ENCODE measurements at regions of chr11 and their contacts with region 1.

Region 1: DNA sequence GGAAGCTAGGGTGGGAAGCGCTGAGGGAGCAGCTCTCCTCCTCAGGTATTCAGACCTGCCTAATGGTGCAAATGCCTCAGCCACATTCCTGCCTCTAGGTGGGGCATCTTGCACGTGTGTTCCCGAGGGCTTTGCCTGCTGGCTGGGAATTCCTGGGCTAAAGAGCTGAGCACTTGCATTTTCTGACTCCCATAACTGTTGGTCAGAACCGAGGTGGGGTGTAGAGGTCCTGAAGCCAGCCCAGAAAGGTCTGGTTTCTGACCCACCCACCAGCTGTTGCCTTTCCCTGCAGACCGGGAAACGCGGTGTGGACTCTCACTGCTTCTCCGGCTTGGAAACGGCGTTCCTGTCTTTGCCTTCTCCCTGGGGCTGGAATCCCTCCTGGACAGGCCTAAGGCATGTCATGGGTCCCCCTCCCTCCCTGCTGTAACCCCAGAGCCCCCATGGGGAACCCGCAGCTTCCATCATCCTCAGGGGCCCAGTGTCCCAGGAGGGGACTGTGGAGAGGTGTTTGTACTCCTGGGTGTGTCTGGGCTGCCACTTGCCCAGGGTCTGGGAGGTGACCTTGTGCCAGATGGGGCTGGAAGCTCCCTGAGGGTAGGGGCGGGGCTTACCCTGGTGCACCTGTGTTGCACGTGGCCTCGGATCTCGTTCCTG is 24.0 kb upstream of the SMIM38 start:
- DNase-seq: peak; percentile 70
- H3K4me3 ChIP-seq: no peak overlapping the region
- H3K27ac ChIP-seq: 0 out of 4 replicates have a peak overlapping the region, but pooled peaks of 1 of the 2 experiments have one; percentile 8
- H3K4me1 ChIP-seq: peaks cover 0 to 15% of the 10 kb centered on the region in 2 experiments; a peak in 1 of 4 replicates
- H3K27me3 ChIP-seq: no peaks in the 10 kb centered on the region
- CTCF ChIP-seq: peak; percentile 75
- EP300 ChIP-seq: no peak
- RAD21 ChIP-seq: peak; percentile 78

Region 2: DNA sequence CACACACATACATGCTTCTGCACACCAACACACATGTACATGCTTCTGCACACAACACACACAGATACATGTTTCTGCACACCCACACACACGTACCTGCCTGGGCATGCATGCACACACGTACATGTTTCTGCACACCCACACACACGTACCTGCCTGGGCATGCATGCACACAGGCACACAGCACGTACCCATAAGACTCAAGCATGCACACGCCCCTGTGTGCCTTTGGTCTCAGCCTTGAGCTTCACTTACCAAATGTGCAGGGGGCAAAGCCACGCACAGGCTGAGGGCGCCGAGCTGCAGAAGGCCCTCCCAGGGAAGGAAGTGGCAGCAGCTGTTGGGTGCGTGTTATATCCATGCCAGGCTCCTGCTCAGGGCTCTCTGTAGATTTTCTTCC is 10.8 kb before region 1 on chr11:
- CTCF ChIA-PET with region 1: interaction called, 15 read pairs
- POLR2A ChIA-PET with region 1: no interaction called
- DNase-seq: no peak
- H3K4me3 ChIP-seq: no peak overlapping the region
- H3K27ac ChIP-seq: no peak overlapping the region
- H3K4me1 ChIP-seq: peaks cover 13 to 15% of the 10 kb centered on the region in 2 experiments; a peak in 2 of 4 replicates
- H3K27me3 ChIP-seq: no peaks in the 10 kb centered on the region
- CTCF ChIP-seq: no peak
- EP300 ChIP-seq: no peak
- RAD21 ChIP-seq: no peak

Region 3: GRCh38 chr11:69157156-69157821 is 25.5 kb after region 1 on chr11:
- CTCF ChIA-PET with region 1: interaction called, 13 read pairs
- POLR2A ChIA-PET with region 1: no interaction called
- DNase-seq: peak; percentile 97
- H3K4me3 ChIP-seq: no peak overlapping the region
- H3K27ac ChIP-seq: peak overlapping the region; percentile 47 to 98; a peak in 3 of 4 replicates
- H3K4me1 ChIP-seq: peaks cover 11 to 36% of the 10 kb centered on the region in 2 experiments; a peak in 2 of 4 replicates
- H3K27me3 ChIP-seq: no peaks in the 10 kb centered on the region
- CTCF ChIP-seq: no peak
- EP300 ChIP-seq: peak in 1 of 2 experiments; percentile 60; a peak in 1 of 4 replicates
- RAD21 ChIP-seq: 0 out of 2 replicates have a peak, but pooled peaks have one; percentile 7

Region 4: GRCh38 chr11:69530278-69531070 is 398.7 kb after region 1 on chr11:
- CTCF ChIA-PET with region 1: no interaction called
- POLR2A ChIA-PET with region 1: no interaction called
- DNase-seq: no peak
- H3K4me3 ChIP-seq: no peak overlapping the region
- H3K27ac ChIP-seq: no peak overlapping the region
- H3K4me1 ChIP-seq: no peaks in the 10 kb centered on the region
- H3K27me3 ChIP-seq: no peaks in the 10 kb centered on the region
- CTCF ChIP-seq: no peak
- EP300 ChIP-seq: no peak
- RAD21 ChIP-seq: no peak

Region 5: GRCh38 chr11:69670158-69670845 is 538.5 kb after region 1 on chr11:
- CTCF ChIA-PET with region 1: interaction called, 10 read pairs
- POLR2A ChIA-PET with region 1: no interaction called
- DNase-seq: peak; percentile 93
- H3K4me3 ChIP-seq: no peak overlapping the region; a peak in 1 of 4 replicates
- H3K27ac ChIP-seq: peak overlapping the region; percentile 20 to 39; a peak in 2 of 4 replicates
- H3K4me1 ChIP-seq: peaks cover 8 to 20% of the 10 kb centered on the region in 2 experiments; a peak in 3 of 4 replicates
- H3K27me3 ChIP-seq: no peaks in the 10 kb centered on the region
- CTCF ChIP-seq: peak; percentile 94
- EP300 ChIP-seq: no peak
- RAD21 ChIP-seq: peak; percentile 91